Ascending aorta (tissue), 2 donors: ENCODE measurements at regions of chr17 and their contacts with region 1.

Region 1: GRCh38 chr17:8222630-8223356 is 12.4 kb upstream of the AURKB start:
- DNase-seq: peak; percentile 79 to 97
- H3K4me3 ChIP-seq: peak overlapping the region; percentile 72 to 82
- H3K27ac ChIP-seq: peak overlapping the region; percentile 94 to 96
- H3K4me1 ChIP-seq: peaks cover 8 to 18% of the 10 kb centered on the region in 2 donors
- H3K27me3 ChIP-seq: no peaks in the 10 kb centered on the region
- CTCF ChIP-seq: no peak

Region 2: DNA sequence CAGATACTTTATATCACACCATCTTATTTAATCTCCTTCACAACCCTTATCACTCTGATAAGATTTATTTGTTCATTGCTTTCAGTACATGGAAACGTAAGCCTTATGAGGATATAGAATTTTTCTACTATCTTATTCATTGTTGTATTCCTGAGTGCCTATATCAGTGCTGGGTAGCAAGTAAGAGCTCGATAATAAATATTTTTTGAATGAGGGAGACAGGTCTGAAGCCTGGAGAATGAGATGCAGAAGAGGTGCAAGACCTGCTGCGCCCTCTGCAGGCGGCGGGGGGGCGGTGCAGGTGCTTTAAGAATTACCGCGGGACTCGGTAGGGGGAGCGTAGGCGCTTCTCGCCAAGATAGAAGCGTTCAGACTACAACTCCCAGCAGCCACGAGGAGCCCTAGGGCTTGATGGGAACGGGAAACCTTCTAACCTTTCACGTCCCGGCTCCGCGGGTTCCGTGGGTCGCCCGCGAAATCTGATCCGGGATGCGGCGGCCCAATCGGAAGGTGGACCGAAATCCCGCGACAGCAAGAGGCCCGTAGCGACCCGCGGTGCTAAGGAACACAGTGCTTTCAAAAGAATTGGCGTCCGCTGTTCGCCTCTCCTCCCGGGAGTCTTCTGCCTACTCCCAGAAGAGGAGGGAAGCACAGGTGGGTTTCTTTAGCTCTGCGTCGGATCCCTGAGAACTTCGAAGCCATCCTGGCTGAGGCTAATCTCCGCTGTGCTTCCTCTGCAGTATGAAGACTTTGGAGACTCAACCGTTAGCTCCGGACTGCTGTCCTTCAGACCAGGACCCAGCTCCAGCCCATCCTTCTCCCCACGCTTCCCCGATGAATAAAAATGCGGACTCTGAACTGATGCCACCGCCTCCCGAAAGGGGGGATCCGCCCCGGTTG is 534.6 kb before region 1 on chr17 and contains the start of gene WRAP53:
- intact Hi-C with region 1: no loop called
- DNase-seq: peak; percentile 97 to 100
- H3K4me3 ChIP-seq: peak within 1 kb of the TSS; percentile 70 to 79
- H3K27ac ChIP-seq: peak within 1 kb of the TSS; percentile 87 to 94
- H3K4me1 ChIP-seq: peaks cover 9 to 16% of the 10 kb centered on the region in 2 donors
- H3K27me3 ChIP-seq: no peaks in the 10 kb centered on the region
- CTCF ChIP-seq: peak; percentile 94 to 99 (median 99)
- total RNA-seq, gene WRAP53: 1.5 TPM

Region 3: DNA sequence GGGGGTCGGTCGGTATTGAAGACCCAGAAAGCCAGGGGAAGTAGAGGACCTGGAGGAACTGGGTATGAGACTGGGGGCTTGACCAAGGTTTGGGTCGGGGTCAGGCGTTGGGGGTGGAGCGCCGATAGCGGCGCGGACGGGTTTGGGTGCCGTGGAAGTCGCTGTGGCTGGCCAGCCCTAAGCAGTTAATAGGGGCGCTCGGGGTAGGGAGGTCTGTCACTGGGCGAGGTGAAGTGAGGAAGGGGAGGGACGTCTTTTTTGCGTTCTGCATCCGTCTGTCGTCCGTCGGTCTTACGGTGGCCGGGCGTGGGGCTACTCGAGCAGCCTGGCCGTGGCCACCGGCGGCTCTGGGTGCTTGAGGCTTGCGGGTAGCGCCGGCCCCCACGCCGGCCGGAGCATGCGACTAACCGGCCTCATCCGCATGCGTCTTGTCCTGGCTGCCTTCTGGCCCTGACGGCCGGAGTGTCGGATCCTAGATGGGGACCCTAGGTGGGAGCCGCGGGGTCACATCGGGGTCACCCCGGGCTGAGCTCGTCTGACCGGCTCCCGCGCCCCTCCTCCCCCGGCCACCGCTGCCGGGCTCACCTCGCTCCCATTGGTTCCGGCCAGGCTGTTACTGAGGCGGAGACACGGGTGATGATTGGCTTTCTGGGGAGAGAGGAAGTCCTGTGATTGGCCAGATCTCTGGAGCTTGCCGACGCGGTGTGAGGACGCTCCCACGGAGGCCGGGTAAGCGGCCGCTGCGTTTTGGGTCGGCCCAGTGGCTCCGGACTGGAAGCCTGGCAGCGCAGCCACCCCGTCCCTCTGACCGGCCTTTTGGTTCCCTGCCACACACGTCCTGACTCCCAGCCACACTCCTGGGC is 378.3 kb before region 1 on chr17:
- intact Hi-C with region 1: loop called (anchors 2 kb)
- DNase-seq: peak; percentile 81 to 97
- H3K4me3 ChIP-seq: peak overlapping the region; percentile 80 to 88
- H3K27ac ChIP-seq: peak overlapping the region; percentile 97 to 99
- H3K4me1 ChIP-seq: peaks cover 6 to 18% of the 10 kb centered on the region in 2 donors
- H3K27me3 ChIP-seq: no peaks in the 10 kb centered on the region
- CTCF ChIP-seq: no peak

Region 4: DNA sequence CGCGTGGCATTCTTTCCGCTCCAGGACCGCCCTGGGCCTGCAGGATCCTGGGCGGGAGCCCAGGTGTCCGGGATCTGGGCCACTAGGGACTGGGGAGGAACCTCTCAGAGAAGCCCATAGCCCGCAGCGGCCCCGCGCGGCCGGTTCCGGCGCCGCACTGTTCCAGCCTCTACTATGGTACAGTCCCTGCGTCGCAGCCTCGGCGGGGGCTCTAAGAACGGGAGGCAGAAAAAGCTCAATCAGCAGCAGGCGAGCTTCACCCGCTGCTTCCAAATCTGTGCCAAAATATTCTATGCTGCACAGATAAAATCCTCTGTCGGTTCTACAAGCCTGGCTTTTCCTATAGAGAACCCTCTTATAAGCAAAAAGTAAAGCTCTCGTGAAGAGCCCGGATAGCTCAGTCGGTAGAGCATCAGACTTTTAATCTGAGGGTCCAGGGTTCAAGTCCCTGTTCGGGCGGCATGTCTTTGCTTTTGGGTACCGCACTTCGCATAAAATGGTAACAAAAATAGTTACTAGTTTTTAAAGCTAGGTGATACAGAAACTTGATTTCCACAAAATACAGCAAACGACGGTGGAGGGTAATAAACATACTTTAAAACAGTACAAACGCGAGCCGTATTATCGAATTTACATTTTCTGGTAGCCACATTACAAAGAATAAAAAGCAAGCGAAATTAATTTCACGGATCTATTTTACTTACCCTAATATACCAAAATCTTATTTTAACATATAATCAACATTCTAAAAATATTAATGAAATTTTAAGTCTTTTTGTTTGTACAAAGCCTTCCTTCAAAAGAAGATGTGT is 103.8 kb before region 1 on chr17:
- intact Hi-C with region 1: loop called (anchors 1 kb)
- DNase-seq: peak; percentile 63 to 95
- H3K4me3 ChIP-seq: peak overlapping the region; percentile 53 to 65
- H3K27ac ChIP-seq: peak overlapping the region; percentile 37 to 70
- H3K4me1 ChIP-seq: peaks cover 21 to 44% of the 10 kb centered on the region in 2 donors
- H3K27me3 ChIP-seq: no peaks in the 10 kb centered on the region
- CTCF ChIP-seq: peak; percentile 91 to 97 (median 92)

Region 5: DNA sequence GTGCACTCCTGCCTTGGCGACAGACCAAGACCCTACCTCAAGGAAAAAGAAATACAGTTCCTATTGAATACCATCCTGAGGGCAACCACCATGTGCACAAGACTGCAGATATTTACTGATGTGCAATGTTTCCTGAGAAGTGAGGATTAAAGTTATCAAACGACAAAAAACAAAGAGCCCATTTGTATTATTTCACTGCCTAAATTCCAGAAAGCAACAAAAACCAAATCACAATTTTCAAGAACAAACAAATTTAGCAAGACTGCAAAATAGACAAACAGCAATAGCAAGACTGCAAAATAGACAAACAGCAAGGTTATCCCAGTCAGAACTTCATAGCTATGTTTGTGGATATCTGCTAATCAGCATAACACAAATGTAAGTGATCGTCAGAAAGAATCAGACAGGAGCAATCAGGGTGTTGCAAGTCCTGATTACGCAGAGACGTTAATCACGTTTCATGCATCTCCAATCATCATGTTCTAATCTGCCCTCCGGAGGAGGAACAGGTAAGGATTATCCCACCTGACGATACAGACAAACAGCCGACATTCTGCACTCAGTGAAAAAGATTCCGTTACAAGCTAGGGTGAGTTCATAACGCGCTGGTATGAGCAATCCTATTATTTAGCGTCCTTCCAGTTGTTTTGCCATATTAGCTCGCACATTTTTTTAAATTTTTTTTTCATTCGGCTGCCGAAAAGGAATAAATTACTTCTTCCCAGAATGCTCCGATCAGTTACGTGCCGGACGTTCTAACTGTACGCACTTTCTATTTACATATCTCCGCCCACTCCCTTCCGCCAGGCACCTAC is 49.5 kb before region 1 on chr17:
- intact Hi-C with region 1: loop called (anchors 5 kb)
- DNase-seq: peak in 1 of 2 donors; percentile 93
- H3K4me3 ChIP-seq: peak overlapping the region; percentile 50 to 58
- H3K27ac ChIP-seq: peak overlapping the region; percentile 78 to 89
- H3K4me1 ChIP-seq: peaks cover 0 to 17% of the 10 kb centered on the region in 2 donors
- H3K27me3 ChIP-seq: no peaks in the 10 kb centered on the region
- CTCF ChIP-seq: no peak

Region 6: DNA sequence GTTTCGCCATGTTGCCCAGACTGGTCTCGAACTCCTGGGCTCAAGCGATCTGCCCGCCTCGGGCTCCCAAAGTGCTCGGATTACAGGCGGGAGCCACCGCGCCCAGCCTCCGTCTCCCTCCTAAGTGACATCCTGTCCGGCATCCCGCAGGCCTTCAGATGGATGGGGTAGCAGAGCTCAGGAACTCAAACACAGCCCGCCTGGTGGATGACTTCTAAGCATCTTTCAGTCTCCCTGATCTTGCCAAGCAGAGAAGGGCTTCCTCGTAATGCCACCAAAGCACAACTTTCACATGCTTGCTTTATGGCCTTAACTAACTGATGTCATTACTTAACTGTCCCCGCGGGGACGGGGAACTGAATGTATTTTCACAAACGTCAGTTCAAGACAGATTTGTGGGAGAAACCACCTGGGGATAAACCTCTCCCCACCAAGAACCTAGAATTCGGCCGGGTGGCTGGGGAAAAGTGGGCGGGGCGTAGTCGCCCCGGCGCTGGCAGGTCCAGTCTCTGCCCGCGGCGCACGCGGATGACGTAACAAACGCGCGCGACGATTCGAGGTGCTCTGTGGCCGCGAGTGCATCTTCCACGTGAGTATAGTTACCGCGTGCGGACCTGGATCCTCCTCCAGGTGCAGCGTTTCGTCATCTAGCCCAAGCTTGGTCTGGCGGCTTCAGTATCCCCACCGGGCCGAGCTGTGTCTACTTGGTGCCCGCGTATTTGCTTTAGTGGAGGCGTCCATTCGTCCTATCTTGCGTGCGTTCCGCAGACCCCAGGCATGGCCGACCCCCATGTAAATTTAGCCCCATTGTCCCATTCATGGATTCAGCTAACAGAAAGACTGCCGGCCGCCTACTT is 26.2 kb after region 1 on chr17 and contains the start of gene PFAS:
- intact Hi-C with region 1: loop called (anchors 1 kb)
- DNase-seq: peak; percentile 75 to 98
- H3K4me3 ChIP-seq: peak within 1 kb of the TSS; percentile 80 to 82
- H3K27ac ChIP-seq: peak within 1 kb of the TSS; percentile 94 to 98
- H3K4me1 ChIP-seq: peaks cover 0 to 6% of the 10 kb centered on the region in 2 donors
- H3K27me3 ChIP-seq: no peaks in the 10 kb centered on the region
- CTCF ChIP-seq: peak in 1 of 3 experiments; percentile 20
- total RNA-seq, gene PFAS: 108 TPM

Region 7: GRCh38 chr17:8300627-8301242 is 77.9 kb after region 1 on chr17:
- intact Hi-C with region 1: loop called (anchors 1 kb)
- DNase-seq: peak; percentile 20 to 70
- H3K4me3 ChIP-seq: no peak overlapping the region
- H3K27ac ChIP-seq: no peak overlapping the region
- H3K4me1 ChIP-seq: no peaks in the 10 kb centered on the region
- H3K27me3 ChIP-seq: no peaks in the 10 kb centered on the region
- CTCF ChIP-seq: peak; percentile 59 to 83 (median 76)